Calu3 (cell line): ENCODE measurements at regions of chr1 and their contacts with region 1.

Region 1: DNA sequence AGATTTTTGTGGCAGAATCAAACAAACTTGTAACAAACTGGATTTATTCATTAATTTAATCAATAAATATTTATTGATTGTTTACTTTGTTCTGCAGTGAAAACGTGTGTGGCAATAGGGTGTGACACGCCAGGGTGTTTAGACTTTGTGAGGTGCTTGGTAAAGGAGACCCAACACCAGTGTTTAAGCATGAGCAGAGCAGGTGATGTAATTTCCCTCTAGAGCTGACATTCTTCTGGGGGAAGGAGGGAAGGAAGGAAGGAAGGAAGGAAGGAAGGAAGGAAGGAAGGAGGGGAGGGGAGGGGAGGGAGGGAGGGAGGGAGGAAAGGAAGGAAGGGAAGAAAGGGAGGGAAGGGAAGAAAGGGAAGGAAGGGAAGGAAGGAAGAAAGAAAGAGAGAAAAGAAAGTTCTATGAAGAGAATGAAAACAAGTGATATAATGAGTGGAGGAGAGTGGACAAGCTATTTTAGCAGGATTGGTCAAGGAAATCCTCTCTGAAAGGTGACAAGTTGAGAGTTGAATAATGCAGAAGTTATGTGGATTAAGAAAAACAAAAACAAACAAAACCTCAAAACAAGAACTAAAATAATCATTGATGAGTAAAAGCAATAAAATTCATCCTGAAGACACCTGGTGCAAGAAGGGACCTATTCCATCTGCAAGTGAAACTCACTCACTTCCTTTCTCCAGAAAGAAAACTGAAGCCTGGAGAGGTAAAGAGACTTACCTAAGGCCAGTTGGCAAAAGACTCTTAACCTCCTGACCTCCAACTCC is 60.8 kb downstream of the TSEN15 start:
- DNase-seq: no peak
- H3K4me3 Mint-ChIP-seq: no peak overlapping the region
- H3K27ac Mint-ChIP-seq: no peak overlapping the region
- H3K4me1 Mint-ChIP-seq: no peaks in the 10 kb centered on the region
- H3K27me3 Mint-ChIP-seq: no peaks in the 10 kb centered on the region
- CTCF ChIP-seq: no peak

Region 2: DNA sequence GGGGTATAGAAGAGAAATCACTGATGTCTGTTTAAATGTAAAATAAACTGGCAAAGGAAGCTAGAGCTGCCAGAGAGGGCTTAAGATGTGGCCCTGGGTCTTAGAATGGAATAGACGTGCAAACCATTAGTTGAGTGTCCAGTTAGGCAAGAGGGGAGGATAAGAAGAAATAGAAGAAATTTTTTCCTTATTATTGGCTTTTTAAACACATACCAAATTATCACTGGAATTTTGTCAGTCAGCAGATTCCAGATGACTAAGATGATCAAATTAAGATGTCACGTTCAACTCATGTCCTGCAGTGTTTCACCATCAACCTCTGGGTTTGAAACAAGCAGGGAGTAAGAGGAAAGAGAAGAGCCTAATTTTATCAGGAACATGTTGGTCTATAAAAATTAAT is 202.9 kb after region 1 on chr1:
- CTCF ChIA-PET with region 1: interaction called, 11 read pairs
- intact Hi-C with region 1: no loop called
- DNase-seq: no peak
- H3K4me3 Mint-ChIP-seq: no peak overlapping the region
- H3K27ac Mint-ChIP-seq: no peak overlapping the region
- H3K4me1 Mint-ChIP-seq: peaks cover 3% of the 10 kb centered on the region
- H3K27me3 Mint-ChIP-seq: no peaks in the 10 kb centered on the region
- CTCF ChIP-seq: no peak